Right ventricle myocardium superior (tissue), 1 donor: ENCODE measurements at regions of chr5 and their contacts with region 1.

Region 1: GRCh38 chr5:95646554-95647431 is at the start of gene RFESD:
- DNase-seq: peak; percentile 100
- ATAC-seq: peak; percentile 99
- total RNA-seq, gene RFESD: 5.1 TPM

Region 2: GRCh38 chr5:95781101-95781583 is 134.3 kb after region 1 on chr5:
- intact Hi-C with region 1: loop called (anchors 5 kb)
- DNase-seq: peak; percentile 85
- ATAC-seq: peak; percentile 93

Region 3: GRCh38 chr5:95835682-95836385 is 189.0 kb after region 1 on chr5:
- intact Hi-C with region 1: loop called (anchors 5 kb)
- DNase-seq: no peak
- ATAC-seq: peak; percentile 18